PC-9 (cell line): ENCODE measurements at regions of chr3 and their contacts with region 1.

Region 1: DNA sequence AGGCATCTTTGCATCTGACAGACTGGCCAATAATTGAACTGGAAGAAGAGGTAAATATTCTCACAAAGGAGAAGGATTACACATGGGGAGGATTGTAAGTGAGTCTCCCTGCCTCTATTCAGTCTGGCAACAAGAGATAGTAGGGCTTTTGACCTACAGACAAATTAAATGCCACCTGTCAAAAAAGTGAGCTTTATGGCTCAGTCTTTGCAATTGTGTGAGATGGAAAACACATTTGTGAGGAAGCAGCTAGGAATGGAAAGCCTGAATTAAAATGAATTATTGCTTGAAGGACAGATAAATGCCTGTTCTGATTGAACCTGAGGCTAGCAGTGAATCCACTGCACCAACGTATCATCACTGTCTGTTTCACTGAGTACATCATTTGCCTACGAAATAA is 173.3 kb upstream of the GOLIM4 start:
- DNase-seq: no peak
- H3K4me3 ChIP-seq: no peak overlapping the region
- H3K27ac ChIP-seq: no peak overlapping the region
- H3K4me1 ChIP-seq: no peaks in the 10 kb centered on the region
- H3K27me3 ChIP-seq: no peaks in the 10 kb centered on the region
- CTCF ChIP-seq: no peak

Region 2: GRCh38 chr3:169780742-169781141 is 1511.7 kb after region 1 on chr3:
- CTCF ChIA-PET with region 1: no interaction called
- POLR2A ChIA-PET with region 1: interaction called, 20 read pairs
- intact Hi-C with region 1: no loop called
- DNase-seq: no peak
- H3K4me3 ChIP-seq: no peak overlapping the region
- H3K27ac ChIP-seq: no peak overlapping the region
- H3K4me1 ChIP-seq: no peaks in the 10 kb centered on the region
- H3K27me3 ChIP-seq: no peaks in the 10 kb centered on the region
- CTCF ChIP-seq: no peak